Activated CD4-positive, alpha-beta memory T cell treated with anti-CD3 and anti-CD28 coated beads, Interleukin-2, amount 10 ng/mL, durations not matched to agents 7 days and 5 days (primary cell): ENCODE measurements at regions of chr12 and their contacts with region 1.

Region 1: DNA sequence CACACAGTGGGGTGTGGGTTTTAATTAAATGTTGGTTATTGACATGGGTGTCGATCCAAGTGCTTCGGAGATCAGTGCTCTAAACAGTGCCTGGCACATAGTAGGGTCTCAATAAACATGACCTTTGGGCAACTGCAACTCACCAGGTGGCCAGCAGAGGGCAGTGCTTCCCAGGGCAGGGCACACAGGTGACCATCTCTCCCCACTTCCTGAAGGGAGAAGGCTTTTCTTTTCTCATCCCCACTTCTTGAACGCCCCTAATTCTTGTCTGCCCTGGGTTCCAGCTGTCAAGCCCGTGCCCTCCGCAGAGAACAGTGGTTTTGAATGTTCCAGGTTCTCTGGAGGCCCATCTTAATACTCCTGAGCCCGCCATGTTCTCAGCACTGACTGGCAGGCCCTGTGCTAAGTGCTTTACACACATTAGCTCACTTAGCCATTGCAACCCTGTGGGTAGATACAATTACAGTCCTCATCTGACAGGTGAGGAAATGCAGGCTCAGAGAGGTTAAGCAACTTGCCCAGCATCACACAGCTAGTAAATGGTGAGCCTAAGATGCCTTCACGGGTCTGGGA is 16.3 kb downstream of the RAPGEF3 start:
- DNase-seq: peak; percentile 82
- H3K4me3 Mint-ChIP-seq: no peak overlapping the region
- H3K27ac Mint-ChIP-seq: no peak overlapping the region
- H3K4me1 Mint-ChIP-seq: peaks cover 20% of the 10 kb centered on the region
- H3K27me3 Mint-ChIP-seq: peaks cover 17% of the 10 kb centered on the region

Region 2: DNA sequence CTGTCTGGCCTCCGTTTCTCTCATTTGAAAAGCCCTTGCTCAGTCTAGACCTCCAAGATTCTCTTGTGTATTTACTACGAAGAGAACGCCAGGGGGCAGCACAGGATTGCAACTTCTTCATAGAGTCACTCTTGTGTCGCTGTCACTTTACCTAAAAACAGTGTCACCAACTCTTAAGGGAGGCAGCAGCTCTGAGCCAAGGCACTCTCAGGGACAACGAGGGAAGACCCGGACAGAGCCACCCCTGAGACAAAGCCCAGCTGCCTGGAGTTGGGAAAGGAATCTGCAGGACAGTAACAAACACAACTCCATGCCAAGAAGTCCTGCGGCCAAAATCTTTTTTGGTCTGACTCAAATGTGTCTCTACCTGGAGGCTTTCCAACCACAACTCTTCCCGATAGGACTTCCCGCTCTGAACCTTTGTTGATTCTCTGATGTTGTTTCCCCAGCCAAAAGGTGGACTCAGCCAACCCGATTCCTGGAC is 26.9 kb before region 1 on chr12:
- CTCF ChIA-PET with region 1: interaction called, 87 read pairs
- POLR2A ChIA-PET with region 1: no interaction called
- DNase-seq: peak; percentile 81
- H3K4me3 Mint-ChIP-seq: no peak overlapping the region
- H3K27ac Mint-ChIP-seq: no peak overlapping the region
- H3K4me1 Mint-ChIP-seq: peaks cover 22% of the 10 kb centered on the region
- H3K27me3 Mint-ChIP-seq: no peaks in the 10 kb centered on the region

Region 3: GRCh38 chr12:47758834-47759690 is 16.7 kb after region 1 on chr12 and contains the start of gene RAPGEF3:
- CTCF ChIA-PET with region 1: interaction called, 188 read pairs
- POLR2A ChIA-PET with region 1: interaction called, 4 read pairs
- DNase-seq: peak; percentile 79
- H3K4me3 Mint-ChIP-seq: peak within 1 kb of the TSS; percentile 70
- H3K27ac Mint-ChIP-seq: no peak within 1 kb of the TSS
- H3K4me1 Mint-ChIP-seq: peaks cover 50% of the 10 kb centered on the region
- H3K27me3 Mint-ChIP-seq: peaks cover 2% of the 10 kb centered on the region
- total RNA-seq, gene RAPGEF3: 1.4 to 1.6 TPM

Region 4: DNA sequence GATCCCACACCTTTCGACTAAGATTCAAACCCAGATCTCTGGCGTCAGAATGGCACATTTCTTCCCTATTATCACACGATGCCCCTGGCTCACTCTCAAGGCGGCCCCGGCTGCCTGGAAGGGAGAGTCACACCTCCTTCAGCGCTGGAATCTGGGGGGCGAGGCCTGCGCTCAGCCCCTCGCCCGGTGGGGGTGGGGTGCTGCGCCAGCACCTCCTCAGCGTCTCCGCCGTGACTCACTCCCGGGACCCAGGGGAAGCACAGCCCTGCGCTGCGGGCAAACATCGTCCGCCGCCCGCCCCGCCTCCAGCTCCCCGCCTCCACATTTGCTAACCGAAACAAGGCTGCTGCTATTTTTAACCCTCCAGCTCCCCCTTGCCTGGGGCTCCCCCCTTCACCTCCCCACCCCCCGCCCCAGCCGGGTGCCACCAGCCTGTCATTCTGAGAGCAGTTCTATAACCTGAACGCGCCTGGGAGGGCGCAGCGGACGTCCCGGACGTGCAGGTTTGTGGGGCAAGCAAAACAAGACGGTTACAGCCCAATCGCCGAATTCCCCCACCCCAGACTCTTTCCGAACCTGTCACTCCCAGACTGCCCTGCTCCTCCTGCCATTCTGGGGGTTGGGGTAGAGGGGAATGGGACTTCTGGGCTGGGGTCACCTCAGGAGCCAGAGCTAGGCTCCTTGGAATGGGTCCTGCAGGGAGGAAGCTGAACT is 70.6 kb after region 1 on chr12:
- CTCF ChIA-PET with region 1: interaction called, 25 read pairs
- POLR2A ChIA-PET with region 1: interaction called, 6 read pairs
- DNase-seq: peak; percentile 96
- H3K4me3 Mint-ChIP-seq: peak overlapping the region; percentile 89
- H3K27ac Mint-ChIP-seq: peak overlapping the region; percentile 93
- H3K4me1 Mint-ChIP-seq: peaks cover 82% of the 10 kb centered on the region
- H3K27me3 Mint-ChIP-seq: no peaks in the 10 kb centered on the region

Region 5: DNA sequence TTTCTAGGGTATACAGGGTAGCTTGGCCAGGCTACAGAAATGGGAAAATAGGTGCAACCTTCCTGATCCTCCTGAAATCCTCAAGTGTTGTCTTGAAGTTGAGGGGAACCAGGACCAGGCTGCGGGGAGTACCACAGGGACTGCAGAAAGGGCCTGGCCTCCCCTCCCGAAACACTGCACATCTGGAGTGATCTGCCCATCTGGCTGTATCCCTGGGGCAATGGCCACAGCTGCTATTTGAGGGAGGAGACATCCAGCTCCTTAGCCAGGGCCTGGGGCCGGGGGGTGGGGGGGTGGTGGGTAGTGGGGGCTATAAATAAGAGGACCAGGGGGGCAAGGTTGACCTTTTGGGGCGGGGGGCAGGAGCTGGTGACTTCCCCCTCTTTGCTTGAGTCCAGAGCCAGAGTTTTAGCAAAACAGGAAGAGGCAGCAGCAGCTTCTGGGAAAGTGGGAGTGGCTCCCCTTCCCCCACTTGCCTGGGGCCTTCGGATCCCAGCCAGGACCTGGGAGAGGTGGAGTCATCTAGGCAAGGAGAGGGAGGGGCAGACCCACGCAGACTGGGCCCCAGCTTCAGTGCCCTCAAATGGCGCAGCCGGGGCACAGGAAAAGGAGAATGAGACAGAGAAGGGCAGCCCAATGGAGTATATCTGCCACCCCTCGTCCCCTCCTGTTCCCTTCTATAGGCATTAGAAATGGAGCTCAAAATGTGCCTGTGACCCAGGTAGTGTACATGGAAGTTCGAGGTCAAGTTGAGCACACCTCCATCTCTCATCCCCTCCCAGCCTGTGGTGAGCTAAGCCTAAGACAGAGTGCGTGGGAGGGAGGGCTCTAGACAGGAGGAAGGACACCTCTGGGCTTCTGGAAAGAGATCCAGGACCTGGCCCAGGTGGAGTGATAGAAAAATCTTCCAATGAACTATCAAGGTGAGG is 86.5 kb after region 1 on chr12:
- CTCF ChIA-PET with region 1: interaction called, 47 read pairs
- POLR2A ChIA-PET with region 1: interaction called, 3 read pairs
- DNase-seq: no peak
- H3K4me3 Mint-ChIP-seq: no peak overlapping the region
- H3K27ac Mint-ChIP-seq: peak overlapping the region; percentile 70
- H3K4me1 Mint-ChIP-seq: peaks cover 89% of the 10 kb centered on the region
- H3K27me3 Mint-ChIP-seq: no peaks in the 10 kb centered on the region

Region 6: DNA sequence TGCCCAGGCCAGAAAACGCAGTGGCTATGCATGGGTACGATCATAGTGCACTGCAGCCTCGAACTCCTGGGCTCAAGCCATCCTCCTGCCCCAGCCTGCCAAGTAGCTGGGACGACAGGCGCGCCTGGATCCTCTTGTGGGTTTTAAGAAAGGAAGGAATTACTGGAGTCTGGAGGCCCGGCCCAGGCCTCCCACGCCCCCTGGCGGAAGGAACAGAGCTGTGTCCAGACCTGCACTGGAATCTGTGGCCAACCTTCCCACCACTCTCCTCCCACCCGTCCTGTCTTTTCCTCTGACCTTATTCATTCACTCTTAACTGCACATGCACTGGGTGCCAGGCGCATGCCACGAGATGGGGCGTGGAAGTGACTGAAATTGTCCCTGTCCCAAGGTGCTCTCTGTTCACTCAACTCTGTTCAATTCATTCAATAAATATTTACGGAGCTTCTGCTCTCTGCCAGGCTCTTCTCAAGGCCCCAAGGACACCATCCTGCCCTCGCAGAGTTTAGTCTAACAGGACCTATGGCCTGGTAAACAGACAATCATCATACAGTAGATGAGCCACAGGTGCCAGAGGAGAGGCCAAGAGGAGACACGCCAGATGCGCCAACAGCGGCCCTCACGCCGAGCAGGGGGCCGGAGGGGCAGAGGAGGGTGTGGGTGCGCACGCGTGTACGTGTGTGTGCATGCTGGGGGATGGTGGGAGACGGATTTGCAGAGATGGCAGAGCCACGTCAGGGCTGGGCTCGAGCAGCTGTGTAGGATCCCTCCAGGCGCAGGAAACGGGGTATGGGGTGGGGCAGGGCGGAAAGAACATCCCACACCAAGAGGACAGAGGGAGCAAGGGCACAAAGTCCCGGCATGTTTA is 207.3 kb after region 1 on chr12:
- CTCF ChIA-PET with region 1: interaction called, 10 read pairs
- POLR2A ChIA-PET with region 1: no interaction called
- DNase-seq: peak; percentile 62
- H3K4me3 Mint-ChIP-seq: no peak overlapping the region
- H3K27ac Mint-ChIP-seq: no peak overlapping the region
- H3K4me1 Mint-ChIP-seq: peaks cover 12% of the 10 kb centered on the region
- H3K27me3 Mint-ChIP-seq: peaks cover 16% of the 10 kb centered on the region

Region 7: GRCh38 chr12:48078901-48079300 is 336.6 kb after region 1 on chr12:
- CTCF ChIA-PET with region 1: no interaction called
- POLR2A ChIA-PET with region 1: no interaction called
- DNase-seq: no peak
- H3K4me3 Mint-ChIP-seq: no peak overlapping the region
- H3K27ac Mint-ChIP-seq: no peak overlapping the region
- H3K4me1 Mint-ChIP-seq: no peaks in the 10 kb centered on the region
- H3K27me3 Mint-ChIP-seq: no peaks in the 10 kb centered on the region